ENCODE measurements at regions of chr7 and their contacts with region 1.

Region 1: GRCh38 chr7:107743567-107744344 is at the start of gene CBLL1:
- DNase-seq: peak; percentile 99
- H3K4me3 Mint-ChIP-seq: peak within 1 kb of the TSS; percentile 93
- H3K27ac Mint-ChIP-seq: peak within 1 kb of the TSS; percentile 100
- H3K4me1 Mint-ChIP-seq: peaks cover 46% of the 10 kb centered on the region
- H3K27me3 Mint-ChIP-seq: peaks cover 3% of the 10 kb centered on the region
- total RNA-seq, gene CBLL1: 46.9 and 49.6 TPM in 2 replicates

Region 2: GRCh38 chr7:107462740-107463444 is 280.9 kb before region 1 on chr7:
- intact Hi-C with region 1: loop called (anchors 1 kb)
- DNase-seq: peak; percentile 7
- H3K4me3 Mint-ChIP-seq: no peak overlapping the region
- H3K27ac Mint-ChIP-seq: no peak overlapping the region
- H3K4me1 Mint-ChIP-seq: no peaks in the 10 kb centered on the region
- H3K27me3 Mint-ChIP-seq: no peaks in the 10 kb centered on the region

Region 3: GRCh38 chr7:107661081-107661864 is 82.5 kb before region 1 on chr7:
- intact Hi-C with region 1: loop called (anchors 1 kb)
- DNase-seq: peak; percentile 55
- H3K4me3 Mint-ChIP-seq: peak overlapping the region; percentile 96
- H3K27ac Mint-ChIP-seq: peak overlapping the region; percentile 92
- H3K4me1 Mint-ChIP-seq: peaks cover 40% of the 10 kb centered on the region
- H3K27me3 Mint-ChIP-seq: peaks cover 3% of the 10 kb centered on the region

Region 4: DNA sequence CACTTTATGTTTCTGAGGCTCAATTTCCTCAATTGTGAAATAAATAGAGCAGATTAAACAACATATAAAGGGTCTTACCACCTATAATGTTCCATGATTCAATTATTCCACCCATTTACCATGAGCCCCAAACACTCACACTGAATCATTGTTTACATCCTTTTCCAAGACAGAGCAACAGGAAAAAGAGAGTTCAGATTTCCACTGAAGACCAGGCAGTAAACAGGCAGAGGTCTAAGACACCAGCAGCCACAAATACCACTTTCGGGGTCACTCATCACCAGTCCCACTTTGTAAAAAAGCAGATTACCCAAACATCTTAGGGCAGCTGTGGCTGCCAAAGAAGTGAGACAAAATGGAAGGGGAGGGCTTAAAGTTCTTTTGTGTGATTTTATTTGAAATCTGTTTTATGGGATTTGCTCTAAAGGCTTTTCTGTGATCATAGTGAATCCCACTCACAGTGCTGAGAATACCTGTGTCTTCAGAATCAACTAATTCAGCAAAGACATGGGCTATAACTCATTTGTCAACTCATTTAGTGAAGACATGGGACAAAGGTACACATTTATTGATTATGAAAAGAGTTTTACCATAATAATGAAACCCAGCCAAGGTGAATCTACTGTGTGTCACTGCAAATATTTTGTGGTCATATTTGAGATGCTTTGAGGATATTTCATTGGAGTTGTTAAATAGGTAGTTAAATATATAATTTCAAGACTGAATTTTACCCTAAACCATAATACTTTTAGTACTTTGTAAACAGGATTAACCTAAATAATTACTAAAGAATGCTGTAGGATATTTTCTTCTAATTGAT is 122.4 kb after region 1 on chr7:
- intact Hi-C with region 1: loop called (anchors 2 kb)
- DNase-seq: no peak
- H3K4me3 Mint-ChIP-seq: peak overlapping the region; percentile 1
- H3K27ac Mint-ChIP-seq: peak overlapping the region; percentile 87
- H3K4me1 Mint-ChIP-seq: peaks cover 24% of the 10 kb centered on the region
- H3K27me3 Mint-ChIP-seq: peaks cover 1% of the 10 kb centered on the region

Region 5: GRCh38 chr7:108135446-108136190 is 391.9 kb after region 1 on chr7:
- intact Hi-C with region 1: loop called (anchors 5 kb)
- DNase-seq: peak; percentile 19
- H3K4me3 Mint-ChIP-seq: no peak overlapping the region
- H3K27ac Mint-ChIP-seq: peak overlapping the region; percentile 84
- H3K4me1 Mint-ChIP-seq: peaks cover 27% of the 10 kb centered on the region
- H3K27me3 Mint-ChIP-seq: peaks cover 39% of the 10 kb centered on the region